PC-9 (cell line): ENCODE measurements at regions of chr9 and their contacts with region 1.

Region 1: GRCh38 chr9:75027187-75028107 is 646 bp downstream of the CARNMT1 start:
- DNase-seq: peak; percentile 47 to 60
- H3K4me3 ChIP-seq: peak overlapping the region; percentile 65
- H3K27ac ChIP-seq: peak overlapping the region; percentile 77
- H3K4me1 ChIP-seq: peaks cover 34% of the 10 kb centered on the region
- H3K27me3 ChIP-seq: no peaks in the 10 kb centered on the region
- CTCF ChIP-seq: no peak

Region 2: DNA sequence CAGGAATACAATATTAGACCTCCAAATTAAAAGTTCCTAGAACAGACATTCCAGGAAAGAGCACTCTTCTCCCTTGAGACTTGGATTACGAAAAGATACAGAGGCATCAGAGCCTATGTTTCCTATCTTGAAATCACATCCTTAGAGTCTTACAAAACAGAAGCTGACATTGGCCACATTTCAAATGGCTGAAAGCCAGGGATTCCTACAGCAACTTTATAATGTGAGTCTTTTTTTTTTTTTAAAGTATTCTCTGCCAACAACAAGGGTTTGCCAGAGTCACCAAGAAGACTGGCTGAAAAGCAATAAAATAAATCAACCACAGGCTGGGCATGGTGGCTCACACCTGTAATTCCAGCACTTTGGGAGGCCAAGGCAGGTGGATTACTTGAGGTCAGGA is 202.8 kb before region 1 on chr9:
- CTCF ChIA-PET with region 1: no interaction called
- POLR2A ChIA-PET with region 1: interaction called, 19 read pairs
- intact Hi-C with region 1: no loop called
- DNase-seq: peak; percentile 48 to 63
- H3K4me3 ChIP-seq: no peak overlapping the region
- H3K27ac ChIP-seq: no peak overlapping the region
- H3K4me1 ChIP-seq: no peaks in the 10 kb centered on the region
- H3K27me3 ChIP-seq: no peaks in the 10 kb centered on the region
- CTCF ChIP-seq: no peak

Region 3: DNA sequence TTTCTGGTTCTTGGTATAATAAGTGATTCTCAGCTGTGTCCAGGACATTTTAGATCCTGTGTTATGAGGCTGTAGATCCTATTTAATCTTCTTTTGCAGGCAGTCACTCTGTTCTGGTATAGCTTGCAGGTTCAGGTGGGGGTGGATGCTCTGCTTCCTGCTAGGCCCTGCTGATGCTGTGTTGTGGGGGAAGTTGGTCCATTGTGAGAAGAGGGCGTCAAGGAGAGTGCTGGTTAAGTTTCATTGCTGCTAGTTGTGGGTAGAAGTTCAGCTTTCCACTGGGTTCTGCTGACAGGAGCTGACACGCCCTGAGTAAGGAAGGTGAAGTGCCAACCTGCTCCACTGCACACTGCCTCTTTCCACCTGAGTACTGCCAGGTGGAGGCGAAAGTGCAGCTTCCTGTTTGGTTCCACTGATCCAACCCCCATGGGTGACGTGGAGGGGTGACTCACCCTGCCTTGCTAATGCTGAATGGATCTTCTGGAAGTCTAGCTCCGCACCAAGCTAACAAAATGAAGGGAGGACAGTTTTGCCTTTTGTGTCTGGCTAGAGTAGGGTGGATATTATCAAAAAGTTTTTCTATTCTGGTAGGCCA is 44.2 kb after region 1 on chr9:
- CTCF ChIA-PET with region 1: interaction called, 13 read pairs
- POLR2A ChIA-PET with region 1: interaction called, 7 read pairs
- intact Hi-C with region 1: no loop called
- DNase-seq: peak in 1 of 2 experiments; percentile 25
- H3K4me3 ChIP-seq: no peak overlapping the region
- H3K27ac ChIP-seq: no peak overlapping the region
- H3K4me1 ChIP-seq: no peaks in the 10 kb centered on the region; the same call in 1 of the 2 replicates
- H3K27me3 ChIP-seq: no peaks in the 10 kb centered on the region
- CTCF ChIP-seq: no peak

Region 4: GRCh38 chr9:75170898-75171360 is 143.5 kb after region 1 on chr9:
- CTCF ChIA-PET with region 1: no interaction called
- POLR2A ChIA-PET with region 1: no interaction called
- intact Hi-C with region 1: loop called (anchors 5 kb)
- DNase-seq: peak; percentile 21 to 52
- H3K4me3 ChIP-seq: no peak overlapping the region
- H3K27ac ChIP-seq: no peak overlapping the region; the same call in 1 of the 2 replicates
- H3K4me1 ChIP-seq: peaks cover 40% of the 10 kb centered on the region
- H3K27me3 ChIP-seq: no peaks in the 10 kb centered on the region
- CTCF ChIP-seq: no peak

Region 5: GRCh38 chr9:76393963-76394679 is 1366.7 kb after region 1 on chr9 and contains the start of gene RFK:
- CTCF ChIA-PET with region 1: interaction called, 6 read pairs
- POLR2A ChIA-PET with region 1: no interaction called
- intact Hi-C with region 1: loop called (anchors 5 kb)
- DNase-seq: peak; percentile 82 to 97
- H3K4me3 ChIP-seq: peak within 1 kb of the TSS; percentile 79
- H3K27ac ChIP-seq: peak within 1 kb of the TSS; percentile 85
- H3K4me1 ChIP-seq: peaks cover 22% of the 10 kb centered on the region
- H3K27me3 ChIP-seq: no peaks in the 10 kb centered on the region
- CTCF ChIP-seq: peak; percentile 53; the same call in 1 of the 2 replicates
- total RNA-seq, gene RFK: 20.6 and 24.4 TPM in 2 replicates